ENCODE measurements at regions of chr16 and their contacts with region 1.

Region 1: DNA sequence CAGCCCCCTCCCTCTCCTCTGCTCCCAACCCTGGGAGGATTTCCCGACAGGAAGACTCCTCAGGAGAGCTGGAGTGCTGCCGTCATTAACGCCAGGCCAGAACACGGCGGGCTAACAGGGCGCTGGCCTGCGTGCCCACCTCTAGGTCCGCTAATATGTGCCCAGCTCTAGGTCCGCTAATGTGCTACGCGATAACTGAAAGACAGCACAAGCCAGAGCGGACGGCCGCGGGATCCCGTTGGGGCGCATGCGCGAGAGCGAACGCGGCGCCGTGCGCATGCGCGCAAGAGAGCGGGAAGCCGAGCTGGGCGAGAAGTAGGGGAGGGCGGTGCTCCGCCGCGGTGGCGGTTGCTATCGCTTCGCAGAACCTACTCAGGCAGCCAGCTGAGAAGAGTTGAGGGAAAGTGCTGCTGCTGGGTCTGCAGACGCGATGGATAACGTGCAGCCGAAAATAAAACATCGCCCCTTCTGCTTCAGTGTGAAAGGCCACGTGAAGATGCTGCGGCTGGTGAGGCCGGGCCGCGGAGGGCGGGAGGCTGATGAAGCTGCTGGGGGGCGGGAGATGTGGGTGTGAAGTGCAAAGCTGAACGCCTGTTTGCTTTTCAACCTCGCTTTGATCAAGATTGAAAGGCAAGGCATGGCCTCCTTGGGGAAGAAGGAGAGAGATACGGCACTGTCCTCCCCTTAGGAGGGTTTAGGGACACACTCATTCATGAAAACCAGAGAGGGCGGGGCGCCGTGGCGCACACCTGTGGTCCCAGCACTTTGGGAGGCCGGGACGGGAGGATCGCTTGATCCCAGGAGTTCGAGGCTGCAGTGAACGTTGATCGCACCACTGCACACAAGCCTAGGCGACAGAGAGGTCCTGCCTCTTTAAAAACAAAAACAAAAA is at the start of gene CKLF:
- DNase-seq: peak; percentile 86 to 95 (median 92)
- H3K4me3 ChIP-seq: peak within 1 kb of the TSS; percentile 43
- H3K27ac ChIP-seq: peak within 1 kb of the TSS; percentile 90 to 96
- H3K4me1 ChIP-seq: peaks cover 7% of the 10 kb centered on the region
- H3K27me3 ChIP-seq: no peaks in the 10 kb centered on the region
- CTCF ChIP-seq: no peak
- EP300 ChIP-seq: no peak
- POLR2A ChIP-seq: peak; percentile 89
- total RNA-seq, gene CKLF: 22.3 to 46.8 (median 30.6) TPM

Region 2: GRCh38 chr16:66483689-66484481 is 68.6 kb before region 1 on chr16:
- intact Hi-C with region 1: loop called in 1 of 4 experiments (anchors 10 kb)
- DNase-seq: peak; percentile 67 to 85 (median 79)
- H3K4me3 ChIP-seq: no peak overlapping the region
- H3K27ac ChIP-seq: no peak overlapping the region
- H3K4me1 ChIP-seq: no peaks in the 10 kb centered on the region
- H3K27me3 ChIP-seq: no peaks in the 10 kb centered on the region
- CTCF ChIP-seq: peak; percentile 72 to 86 (median 85)
- EP300 ChIP-seq: no peak
- POLR2A ChIP-seq: no peak

Region 3: GRCh38 chr16:66516808-66517585 is 35.5 kb before region 1 on chr16:
- intact Hi-C with region 1: loop called in 3 of 4 experiments (anchors 5 kb)
- DNase-seq: peak; percentile 99
- H3K4me3 ChIP-seq: peak overlapping the region; percentile 15
- H3K27ac ChIP-seq: peak overlapping the region; percentile 84 to 86
- H3K4me1 ChIP-seq: peaks cover 21% of the 10 kb centered on the region
- H3K27me3 ChIP-seq: no peaks in the 10 kb centered on the region
- CTCF ChIP-seq: no peak
- EP300 ChIP-seq: no peak
- POLR2A ChIP-seq: peak; percentile 55

Region 4: DNA sequence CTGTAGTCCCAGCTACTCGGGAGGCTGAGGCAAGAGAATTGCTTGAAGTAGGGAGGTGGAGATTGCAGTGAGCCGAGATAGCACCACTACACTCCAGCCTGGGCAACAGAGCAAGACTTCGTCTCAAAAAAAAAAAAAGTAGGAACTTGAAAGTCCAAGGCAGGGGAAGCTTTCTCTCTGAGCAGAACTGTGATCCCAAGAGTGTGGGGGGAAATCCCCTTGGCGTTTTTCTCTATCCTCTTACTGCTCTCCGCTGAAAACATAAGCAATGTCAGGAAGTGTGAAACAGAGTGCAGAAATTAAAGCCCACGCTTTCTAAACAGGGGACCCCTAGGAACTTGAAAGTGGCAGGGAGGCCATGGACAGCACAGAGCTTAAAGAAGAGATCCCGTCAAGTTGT is 42.2 kb after region 1 on chr16:
- intact Hi-C with region 1: no loop called
- DNase-seq: no peak
- H3K4me3 ChIP-seq: no peak overlapping the region
- H3K27ac ChIP-seq: no peak overlapping the region
- H3K4me1 ChIP-seq: no peaks in the 10 kb centered on the region
- H3K27me3 ChIP-seq: no peaks in the 10 kb centered on the region
- CTCF ChIP-seq: no peak
- EP300 ChIP-seq: no peak
- POLR2A ChIP-seq: no peak

Region 5: DNA sequence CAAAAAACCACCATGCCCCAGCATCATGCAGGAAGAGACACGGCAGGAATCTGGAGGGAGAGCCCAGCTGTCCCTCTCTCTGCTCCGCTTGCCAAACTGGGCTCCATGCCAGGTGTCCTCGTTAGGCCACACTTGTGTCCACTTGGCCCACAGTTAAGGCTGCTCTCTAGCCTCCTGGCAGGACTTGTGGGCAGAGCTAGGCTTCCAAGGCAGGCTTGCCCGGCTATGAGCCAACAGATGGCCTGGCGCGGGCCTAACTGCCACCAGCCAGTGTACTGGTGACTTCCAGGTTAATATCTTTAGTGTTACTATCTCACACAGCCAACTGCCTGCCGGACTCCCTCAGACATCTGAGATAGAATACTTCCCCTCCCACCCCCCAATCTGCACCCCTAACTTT is 917.8 kb after region 1 on chr16:
- intact Hi-C with region 1: no loop called
- DNase-seq: peak in 3 of 5 donors; percentile 49 to 60 (median 54)
- H3K4me3 ChIP-seq: no peak overlapping the region
- H3K27ac ChIP-seq: no peak overlapping the region
- H3K4me1 ChIP-seq: peaks cover 6% of the 10 kb centered on the region
- H3K27me3 ChIP-seq: no peaks in the 10 kb centered on the region
- CTCF ChIP-seq: no peak
- EP300 ChIP-seq: no peak
- POLR2A ChIP-seq: no peak

Measured in ovary (tissue), 10 donors.